Sigmoid colon (tissue), 7 donors: ENCODE measurements at regions of chr7 and their contacts with region 1.

Region 1: DNA sequence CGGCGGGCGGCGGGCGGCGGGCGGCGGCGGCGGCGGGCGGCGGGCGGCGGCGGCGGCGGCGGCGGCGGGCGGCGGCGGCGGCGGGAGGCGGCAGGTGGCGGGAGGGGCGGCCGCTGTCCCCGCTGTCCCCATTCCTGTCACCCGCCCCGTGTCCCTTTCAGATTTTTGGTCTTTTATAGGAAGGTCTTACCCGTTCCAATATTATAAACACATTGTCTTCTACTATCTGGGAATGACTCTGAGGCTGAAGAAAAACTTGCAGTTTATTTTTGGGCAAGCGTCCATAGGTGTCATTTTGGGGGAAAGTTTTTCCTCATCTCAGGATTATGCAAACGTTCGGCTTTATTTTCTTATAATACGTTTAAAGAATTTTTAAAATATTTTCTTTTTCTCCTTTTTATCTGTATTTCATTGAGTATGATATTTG is 578 bp downstream of the ZNF713 start:
- DNase-seq: no peak
- H3K4me3 ChIP-seq: peak overlapping the region; percentile 45 to 67 (median 50)
- H3K27ac ChIP-seq: peak overlapping the region; percentile 63 to 73 (median 70)
- H3K4me1 ChIP-seq: peaks cover 0 to 10% (median 0%) of the 10 kb centered on the region in 4 donors
- H3K27me3 ChIP-seq: no peaks in the 10 kb centered on the region
- CTCF ChIP-seq: no peak
- EP300 ChIP-seq: no peak
- POLR2A ChIP-seq: no peak

Region 2: DNA sequence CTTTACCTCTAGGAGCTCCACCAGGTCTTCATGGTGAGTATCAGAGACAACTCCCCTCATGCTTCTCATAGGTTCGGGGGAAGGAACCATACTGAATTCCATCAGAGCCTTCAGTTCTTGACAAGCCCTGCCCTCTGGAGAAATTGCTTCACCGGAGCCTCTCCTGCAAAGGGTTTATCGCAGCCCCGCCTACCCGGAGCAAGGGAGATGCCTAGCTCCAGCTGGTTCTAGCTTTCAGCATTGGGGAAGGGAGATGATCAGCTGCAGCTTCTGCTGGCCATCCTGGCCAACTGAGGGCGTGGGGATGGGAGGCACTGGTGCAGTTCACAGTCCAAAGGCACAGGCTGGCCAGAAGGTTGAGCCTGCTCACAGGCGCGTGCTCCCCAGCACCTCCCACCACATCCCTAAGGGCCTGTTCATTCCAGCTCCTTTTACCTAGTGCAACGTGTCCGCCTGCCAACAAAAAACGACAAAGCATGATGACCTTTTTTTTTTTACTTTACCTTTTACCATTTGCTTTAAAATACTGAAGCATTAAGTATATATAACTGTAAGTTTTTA is 491.5 kb before region 1 on chr7:
- intact Hi-C with region 1: no loop called
- DNase-seq: no peak
- H3K4me3 ChIP-seq: no peak overlapping the region
- H3K27ac ChIP-seq: no peak overlapping the region
- H3K4me1 ChIP-seq: no peaks in the 10 kb centered on the region
- H3K27me3 ChIP-seq: no peaks in the 10 kb centered on the region
- CTCF ChIP-seq: no peak
- EP300 ChIP-seq: no peak
- POLR2A ChIP-seq: no peak

Region 3: DNA sequence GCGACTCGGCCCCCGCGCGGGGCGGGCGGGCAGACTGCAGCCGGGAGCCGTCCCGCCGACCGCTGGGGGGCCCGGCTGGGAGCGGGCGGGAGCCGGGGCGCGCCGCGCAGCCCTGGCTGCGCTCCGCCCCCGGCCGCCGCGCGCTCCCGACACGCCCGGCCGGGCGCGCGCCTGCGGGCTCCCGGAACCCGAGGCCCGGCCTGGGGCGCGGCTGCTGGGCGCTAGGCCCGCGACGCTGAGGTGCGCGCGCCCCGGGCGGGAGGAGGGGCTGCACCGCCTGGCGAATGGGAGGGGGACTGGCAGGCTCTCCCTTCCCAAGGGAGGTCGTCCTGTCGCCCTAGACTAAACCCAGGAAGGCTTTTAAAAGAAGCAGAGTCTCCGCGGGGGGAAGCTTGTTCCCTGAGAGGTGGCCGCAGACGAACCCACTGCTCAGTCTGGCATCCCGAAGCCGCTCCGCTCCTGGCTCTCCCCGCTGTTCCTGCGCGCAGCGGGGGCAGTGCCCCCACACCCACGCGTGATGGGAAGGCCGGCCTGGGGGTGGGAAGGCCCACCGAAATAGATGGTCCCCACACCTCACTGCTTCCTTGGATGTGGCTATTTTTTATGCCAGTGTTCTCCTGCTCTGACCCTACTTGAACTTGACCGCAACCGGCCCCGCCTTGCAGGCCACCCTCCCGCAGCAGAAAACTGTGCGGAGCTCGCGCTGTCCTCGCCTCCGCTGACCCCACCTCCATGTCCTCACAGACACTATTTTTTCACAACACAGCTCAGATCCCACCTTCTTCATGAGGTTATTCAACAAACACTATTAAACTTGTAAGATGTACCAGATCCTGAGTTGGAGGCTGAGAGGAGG is 315.2 kb before region 1 on chr7 and contains the start of gene VOPP1:
- intact Hi-C with region 1: loop called (anchors 5 kb)
- DNase-seq: peak; percentile 73
- H3K4me3 ChIP-seq: peak within 1 kb of the TSS; percentile 97 to 99 (median 98)
- H3K27ac ChIP-seq: peak within 1 kb of the TSS; percentile 87 to 96 (median 92)
- H3K4me1 ChIP-seq: peaks cover 0 to 45% (median 25%) of the 10 kb centered on the region in 4 donors
- H3K27me3 ChIP-seq: no peaks in the 10 kb centered on the region
- CTCF ChIP-seq: no peak
- EP300 ChIP-seq: no peak
- POLR2A ChIP-seq: peak in 1 of 2 donors; percentile 20
- total RNA-seq, gene VOPP1: 22.2 to 26.4 (median 24.3) TPM

Region 4: GRCh38 chr7:55951637-55952351 is 64.0 kb after region 1 on chr7 and contains the start of gene MRPS17:
- intact Hi-C with region 1: loop called (anchors 1 kb)
- DNase-seq: peak; percentile 94
- H3K4me3 ChIP-seq: peak within 1 kb of the TSS; percentile 55 to 86 (median 82)
- H3K27ac ChIP-seq: peak within 1 kb of the TSS; percentile 77 to 87 (median 82)
- H3K4me1 ChIP-seq: peaks cover 0 to 14% (median 10%) of the 10 kb centered on the region in 4 donors
- H3K27me3 ChIP-seq: no peaks in the 10 kb centered on the region
- CTCF ChIP-seq: no peak
- EP300 ChIP-seq: peak in 1 of 4 donors; percentile 21
- POLR2A ChIP-seq: peak; percentile 61 to 71
- total RNA-seq, gene MRPS17: 9.7 to 15.6 (median 12.5) TPM

Region 5: GRCh38 chr7:56051339-56052191 is 163.7 kb after region 1 on chr7 and contains the starts of genes CCT6A and PSPH:
- intact Hi-C with region 1: loop called (anchors 5 kb)
- DNase-seq: peak; percentile 99
- H3K4me3 ChIP-seq: peak within 1 kb of the TSS; percentile 60 to 92 (median 81)
- H3K27ac ChIP-seq: peak within 1 kb of the TSS; percentile 82 to 97 (median 90)
- H3K4me1 ChIP-seq: peaks cover 0 to 64% (median 51%) of the 10 kb centered on the region in 4 donors
- H3K27me3 ChIP-seq: no peaks in the 10 kb centered on the region
- CTCF ChIP-seq: no peak
- EP300 ChIP-seq: peak in 1 of 4 donors; percentile 53
- POLR2A ChIP-seq: peak in 1 of 2 donors; percentile 77
- total RNA-seq, gene CCT6A: 67.0 to 93.1 (median 88.5) TPM
- total RNA-seq, gene PSPH: 7.2 to 18.8 (median 9.9) TPM

Region 6: DNA sequence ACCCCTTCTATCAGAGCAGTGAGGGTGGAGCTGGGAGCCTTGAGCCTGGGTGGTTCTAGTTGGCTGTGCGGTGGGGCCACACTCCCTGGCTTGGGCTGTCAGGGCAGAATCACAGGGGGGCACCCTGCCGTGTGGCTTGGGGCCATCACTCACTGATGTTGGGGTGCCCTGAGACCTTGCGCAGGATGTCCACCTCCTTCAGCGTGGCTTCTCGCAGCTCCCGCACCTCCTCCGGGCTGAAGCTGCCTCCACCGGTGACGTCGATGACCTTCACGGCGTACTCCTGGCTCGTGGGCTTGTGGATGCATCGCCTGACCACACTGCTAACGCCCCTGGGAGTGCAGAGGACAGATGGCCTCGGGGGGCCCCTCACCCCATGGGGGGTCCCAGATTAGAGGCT is 199.6 kb after region 1 on chr7:
- intact Hi-C with region 1: loop called (anchors 5 kb)
- DNase-seq: no peak
- H3K4me3 ChIP-seq: no peak overlapping the region
- H3K27ac ChIP-seq: no peak overlapping the region
- H3K4me1 ChIP-seq: peaks cover 0 to 37% (median 32%) of the 10 kb centered on the region in 4 donors
- H3K27me3 ChIP-seq: no peaks in the 10 kb centered on the region
- CTCF ChIP-seq: no peak
- EP300 ChIP-seq: no peak
- POLR2A ChIP-seq: no peak